ENCODE measurements at regions of chr1 and their contacts with region 1.

Region 1: GRCh38 chr1:67053785-67054772 is at the start of gene SLC35D1:
- DNase-seq: peak; percentile 70 to 87
- H3K4me3 ChIP-seq: peak within 1 kb of the TSS; percentile 74 to 81
- H3K27ac ChIP-seq: peak within 1 kb of the TSS; percentile 92 to 93
- H3K4me1 ChIP-seq: peaks cover 0 to 30% (median 11%) of the 10 kb centered on the region in 4 donors
- H3K27me3 ChIP-seq: no peaks in the 10 kb centered on the region
- CTCF ChIP-seq: no peak

Region 2: DNA sequence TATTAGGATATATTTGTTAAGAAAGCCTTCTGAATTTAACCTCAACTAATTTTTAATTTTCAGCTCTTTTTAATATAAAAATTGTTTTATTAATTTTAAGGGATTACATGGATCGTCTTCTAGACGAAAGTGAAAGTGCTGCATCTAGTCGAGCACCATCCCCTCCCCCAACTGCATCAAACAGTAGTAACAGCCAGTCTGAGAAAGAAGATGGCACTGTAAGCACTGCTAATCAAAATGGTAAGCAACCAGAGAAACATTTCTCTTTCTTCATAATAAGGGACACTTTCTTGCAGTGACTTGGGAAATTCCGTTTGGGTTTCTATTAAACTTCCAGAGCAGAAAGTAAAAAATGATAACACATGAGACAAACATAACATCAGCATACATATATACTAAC is 72.4 kb before region 1 on chr1:
- intact Hi-C with region 1: no loop called
- DNase-seq: no peak
- H3K4me3 ChIP-seq: peak overlapping the region; percentile 2 to 34
- H3K27ac ChIP-seq: peak overlapping the region; percentile 8 to 54
- H3K4me1 ChIP-seq: peaks cover 0 to 15% (median 2%) of the 10 kb centered on the region in 4 donors
- H3K27me3 ChIP-seq: no peaks in the 10 kb centered on the region
- CTCF ChIP-seq: no peak

Region 3: DNA sequence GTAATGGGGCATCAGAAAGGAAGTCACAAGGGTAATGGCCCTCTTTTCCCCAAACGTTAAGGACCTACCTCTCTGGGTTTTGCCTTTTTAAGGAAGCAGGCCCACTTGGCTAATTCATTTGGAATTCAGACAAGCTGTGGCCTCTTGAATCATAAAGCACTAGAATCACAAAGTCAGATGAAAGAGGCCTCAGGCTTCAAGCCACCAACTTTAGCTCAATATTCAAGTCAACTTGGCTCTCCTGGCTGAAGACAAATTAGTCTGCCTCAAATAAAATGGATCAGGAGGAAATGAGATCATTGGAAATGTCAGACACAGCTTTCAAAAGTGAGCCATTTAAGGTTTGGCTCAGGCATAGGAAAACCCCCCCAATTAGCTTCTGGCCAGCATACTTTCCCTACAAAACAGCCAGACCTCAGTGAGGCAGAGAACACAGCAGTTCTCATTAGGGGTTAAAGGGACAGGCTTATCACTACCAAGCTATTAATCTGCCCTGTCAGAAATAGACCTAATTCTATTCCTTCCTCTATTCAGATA is 34.4 kb before region 1 on chr1:
- intact Hi-C with region 1: loop called (anchors 5 kb)
- DNase-seq: no peak
- H3K4me3 ChIP-seq: no peak overlapping the region
- H3K27ac ChIP-seq: peak overlapping the region; percentile 76 to 77
- H3K4me1 ChIP-seq: peaks cover 0 to 50% (median 27%) of the 10 kb centered on the region in 4 donors
- H3K27me3 ChIP-seq: no peaks in the 10 kb centered on the region
- CTCF ChIP-seq: no peak